Naive thymus-derived CD4-positive, alpha-beta T cell (primary cell): ENCODE measurements at regions of chr1 and their contacts with region 1.

Region 1: DNA sequence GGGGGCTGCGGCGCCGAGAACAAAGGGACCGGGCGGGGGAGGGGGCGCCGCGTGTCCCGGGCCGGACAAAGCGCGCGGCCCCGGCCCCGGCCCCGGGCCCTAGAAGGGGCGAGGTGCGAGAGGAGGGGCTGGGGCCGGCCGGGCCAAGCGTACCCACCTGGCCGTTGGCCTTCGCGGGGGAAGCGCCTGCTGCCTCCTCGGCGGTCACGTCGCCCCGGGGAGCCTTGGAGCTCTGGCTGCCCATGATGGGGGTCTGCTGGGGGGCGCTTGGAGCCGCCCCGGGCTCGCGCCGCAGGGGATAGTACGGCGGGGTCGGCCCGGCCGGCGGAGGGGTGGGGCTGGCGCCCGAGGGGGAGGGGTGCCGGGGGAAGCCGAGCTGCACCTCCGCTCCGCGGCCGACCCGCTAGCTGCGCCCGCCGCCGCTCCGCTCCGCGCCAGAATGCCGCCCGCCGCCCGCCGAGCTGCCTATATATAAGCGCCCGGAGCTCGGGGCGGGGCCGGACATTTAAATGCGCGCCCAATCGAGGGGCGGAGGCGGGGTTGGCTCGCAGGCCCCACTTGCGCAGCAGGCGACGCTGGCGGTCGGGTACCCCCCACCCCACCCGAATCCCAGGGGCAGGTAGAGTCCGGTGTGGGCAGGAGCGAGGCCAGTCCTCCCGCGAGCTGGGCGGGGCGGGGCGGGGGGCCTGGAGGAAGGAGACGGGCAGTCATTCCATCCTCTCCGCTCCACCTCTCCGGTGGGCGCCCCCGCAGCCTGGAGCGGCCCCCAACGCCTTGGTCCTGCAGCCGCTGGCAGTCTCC is at the start of gene MARCKSL1:
- DNase-seq: peak; percentile 81 to 90 (median 87)
- ATAC-seq: peak; percentile 64
- H3K4me3 ChIP-seq: peak within 1 kb of the TSS; percentile 60
- H3K4me3 Mint-ChIP-seq: peak within 1 kb of the TSS; percentile 82 to 93 (median 90)
- H3K27ac ChIP-seq: peak within 1 kb of the TSS; percentile 70
- H3K27ac Mint-ChIP-seq: peak within 1 kb of the TSS; percentile 74 to 95 (median 89)
- H3K4me1 ChIP-seq: peaks cover 20 to 33% of the 10 kb centered on the region in 2 donors
- H3K4me1 Mint-ChIP-seq: peaks cover 38 to 52% (median 43%) of the 10 kb centered on the region in 7 donors
- H3K27me3 ChIP-seq: no peaks in the 10 kb centered on the region
- H3K27me3 Mint-ChIP-seq: peaks cover 0 to 1% (median 0%) of the 10 kb centered on the region in 5 donors
- total RNA-seq, gene MARCKSL1: 22.2 to 70.2 (median 41.7) TPM

Region 2: GRCh38 chr1:31111290-31111977 is 1224.6 kb before region 1 on chr1:
- CTCF ChIA-PET with region 1: no interaction called
- POLR2A ChIA-PET with region 1: no interaction called
- intact Hi-C with region 1: no loop called
- DNase-seq: no peak
- ATAC-seq: no peak
- H3K4me3 ChIP-seq: no peak overlapping the region
- H3K4me3 Mint-ChIP-seq: no peak overlapping the region
- H3K27ac ChIP-seq: no peak overlapping the region
- H3K27ac Mint-ChIP-seq: no peak overlapping the region
- H3K4me1 ChIP-seq: no peaks in the 10 kb centered on the region
- H3K4me1 Mint-ChIP-seq: peaks cover 0 to 2% (median 0%) of the 10 kb centered on the region in 7 donors
- H3K27me3 ChIP-seq: no peaks in the 10 kb centered on the region
- H3K27me3 Mint-ChIP-seq: peaks cover 0 to 13% (median 11%) of the 10 kb centered on the region in 5 donors

Region 3: GRCh38 chr1:32072622-32073298 is 263.2 kb before region 1 on chr1 and contains the start of gene TMEM39B:
- CTCF ChIA-PET with region 1: no interaction called
- POLR2A ChIA-PET with region 1: interaction called, 4 read pairs
- intact Hi-C with region 1: loop called in 1 of 2 experiments (anchors 5 kb)
- DNase-seq: peak; percentile 90 to 97 (median 96)
- ATAC-seq: peak; percentile 92
- H3K4me3 ChIP-seq: peak within 1 kb of the TSS; percentile 98
- H3K4me3 Mint-ChIP-seq: peak within 1 kb of the TSS; percentile 83 to 94 (median 91)
- H3K27ac ChIP-seq: peak within 1 kb of the TSS; percentile 82
- H3K27ac Mint-ChIP-seq: peak within 1 kb of the TSS; percentile 84 to 95 (median 92)
- H3K4me1 ChIP-seq: peaks cover 5 to 16% of the 10 kb centered on the region in 2 donors
- H3K4me1 Mint-ChIP-seq: peaks cover 21 to 58% (median 47%) of the 10 kb centered on the region in 7 donors
- H3K27me3 ChIP-seq: no peaks in the 10 kb centered on the region
- H3K27me3 Mint-ChIP-seq: no peaks in the 10 kb centered on the region
- total RNA-seq, gene TMEM39B: 11.4 to 35.9 (median 26.4) TPM

Region 4: DNA sequence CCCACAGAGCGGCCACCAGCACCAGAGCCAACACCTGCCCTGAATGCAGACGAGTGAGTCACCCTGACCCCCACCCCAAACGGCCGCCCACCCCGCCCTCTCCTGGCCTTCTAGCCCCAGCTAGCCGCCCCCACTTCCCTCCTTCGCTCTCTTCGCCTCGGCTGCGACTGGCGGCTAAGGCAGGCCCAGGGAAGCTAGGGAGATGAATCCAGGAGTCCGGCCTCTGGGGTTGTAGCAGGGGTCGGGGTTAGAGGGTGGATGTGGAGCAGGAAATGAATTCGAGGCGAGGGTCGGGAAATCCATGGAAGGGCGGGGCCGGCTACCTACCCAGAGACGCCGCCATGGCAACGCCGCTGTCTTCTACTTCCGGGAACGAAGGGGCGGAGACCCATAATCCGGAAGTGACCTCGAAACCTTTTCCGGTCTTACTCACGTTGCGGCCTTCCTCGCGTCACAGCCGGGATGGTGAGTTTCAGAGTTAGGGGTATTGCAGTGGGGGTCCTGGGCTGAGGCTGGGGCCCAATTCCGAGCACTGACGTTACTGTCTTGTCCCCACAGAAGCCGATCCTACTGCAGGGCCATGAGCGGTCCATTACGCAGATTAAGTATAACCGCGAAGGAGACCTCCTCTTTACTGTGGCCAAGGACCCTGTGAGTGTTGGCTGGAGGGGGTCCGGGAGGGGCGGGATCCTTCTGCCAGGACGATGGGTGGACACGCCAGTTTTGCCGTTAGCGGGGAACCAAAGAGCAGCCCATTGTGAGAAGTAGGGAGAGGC is 113.8 kb before region 1 on chr1 and contains the starts of genes EIF3I and TMEM234:
- CTCF ChIA-PET with region 1: interaction called, 14 read pairs
- POLR2A ChIA-PET with region 1: interaction called, 16 read pairs
- intact Hi-C with region 1: loop called in 1 of 2 experiments (anchors 1 kb)
- DNase-seq: peak; percentile 71 to 94 (median 89)
- ATAC-seq: peak; percentile 95
- H3K4me3 ChIP-seq: peak within 1 kb of the TSS; percentile 99
- H3K4me3 Mint-ChIP-seq: peak within 1 kb of the TSS; percentile 90 to 98 (median 97)
- H3K27ac ChIP-seq: peak within 1 kb of the TSS; percentile 99
- H3K27ac Mint-ChIP-seq: peak within 1 kb of the TSS; percentile 94 to 99 (median 98)
- H3K4me1 ChIP-seq: peaks cover 23 to 24% of the 10 kb centered on the region in 2 donors
- H3K4me1 Mint-ChIP-seq: peaks cover 14 to 57% (median 37%) of the 10 kb centered on the region in 7 donors
- H3K27me3 ChIP-seq: no peaks in the 10 kb centered on the region
- H3K27me3 Mint-ChIP-seq: no peaks in the 10 kb centered on the region
- total RNA-seq, gene EIF3I: 82.6 to 182 (median 104) TPM
- total RNA-seq, gene TMEM234: 15.9 to 29.6 (median 21.4) TPM

Region 5: DNA sequence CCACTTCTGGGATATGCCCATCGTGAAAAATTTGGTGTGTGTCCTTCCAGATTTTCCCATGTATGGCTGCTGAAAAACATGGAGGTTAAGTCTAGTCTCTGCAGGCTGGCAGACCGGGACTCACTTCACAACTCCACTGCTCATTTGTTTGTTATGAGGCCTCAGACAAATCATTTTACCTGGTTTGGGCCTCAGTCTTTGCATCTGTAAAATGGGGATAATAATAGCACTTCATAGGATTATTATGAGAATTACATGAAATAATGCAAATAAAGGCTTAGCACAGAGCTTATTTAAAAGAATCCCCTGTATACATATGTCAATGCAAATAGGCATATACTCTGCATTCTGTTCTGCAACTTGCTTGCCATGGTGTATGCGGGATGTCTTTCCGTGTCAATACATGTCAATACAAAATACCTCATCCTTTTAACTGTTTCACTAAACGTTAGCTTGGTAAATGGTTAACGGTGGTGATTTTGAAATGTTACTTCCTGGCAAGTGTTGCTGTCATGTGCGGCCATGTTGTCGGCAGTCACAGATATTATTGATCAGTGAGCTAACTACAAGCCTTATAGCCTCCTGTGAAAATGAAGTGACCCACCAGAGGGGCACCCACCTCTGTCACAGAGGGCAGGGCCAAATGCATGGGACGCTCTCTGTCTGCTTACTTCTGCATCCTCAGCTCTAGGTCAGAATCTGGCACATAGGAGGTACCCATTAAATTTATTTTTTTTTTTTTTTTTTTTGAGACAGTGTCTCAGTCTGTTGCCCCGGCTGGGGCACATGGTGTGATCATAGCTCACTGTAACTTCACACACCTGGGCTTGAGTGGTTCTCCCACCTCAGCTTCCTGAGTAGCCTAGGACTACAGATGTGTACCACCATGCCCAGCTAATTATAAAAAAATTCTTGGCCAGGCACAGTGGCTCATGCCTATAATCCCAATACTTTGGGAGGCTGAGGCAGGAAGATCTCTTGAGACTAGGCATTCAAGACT is 80.6 kb before region 1 on chr1:
- CTCF ChIA-PET with region 1: interaction called, 3 read pairs
- POLR2A ChIA-PET with region 1: interaction called, 41 read pairs
- intact Hi-C with region 1: no loop called
- DNase-seq: peak in 5 of 9 donors; percentile 50 to 68 (median 62)
- ATAC-seq: peak; percentile 31
- H3K4me3 ChIP-seq: peak overlapping the region; percentile 55
- H3K4me3 Mint-ChIP-seq: peak overlapping the region; percentile 88 to 100 (median 98)
- H3K27ac ChIP-seq: peak overlapping the region; percentile 91
- H3K27ac Mint-ChIP-seq: peak overlapping the region; percentile 90 to 99 (median 97)
- H3K4me1 ChIP-seq: peaks cover 39 to 41% of the 10 kb centered on the region in 2 donors
- H3K4me1 Mint-ChIP-seq: peaks cover 24 to 56% (median 48%) of the 10 kb centered on the region in 7 donors
- H3K27me3 ChIP-seq: no peaks in the 10 kb centered on the region
- H3K27me3 Mint-ChIP-seq: no peaks in the 10 kb centered on the region

Region 6: DNA sequence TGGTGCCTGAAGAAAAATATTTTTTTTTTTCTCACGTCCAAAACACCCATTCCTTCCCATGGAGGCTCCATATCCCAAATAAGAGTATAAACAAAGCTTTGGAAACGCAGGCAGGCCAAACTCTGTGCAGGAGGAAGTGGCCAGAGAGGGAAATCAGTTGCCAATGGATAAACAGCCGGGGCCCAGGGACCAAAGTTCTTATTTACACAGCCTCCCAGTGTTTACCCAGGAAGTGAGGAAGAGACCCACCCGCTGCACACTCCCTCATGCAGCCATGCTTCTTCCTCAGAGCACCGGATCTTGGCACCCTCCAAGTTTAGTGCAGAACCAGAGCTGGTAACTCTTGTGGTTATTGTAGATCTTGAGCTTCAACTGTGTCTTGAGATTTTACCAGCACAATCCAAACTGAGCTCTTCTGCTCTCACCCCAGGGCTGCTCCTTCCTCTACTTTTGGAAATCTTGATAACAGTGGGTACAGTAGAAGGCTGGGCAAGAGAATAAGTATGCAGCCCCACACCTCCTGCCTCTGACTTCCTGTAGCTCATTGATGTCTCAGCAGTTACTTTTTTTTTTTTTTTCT is 14.2 kb before region 1 on chr1:
- CTCF ChIA-PET with region 1: interaction called, 4 read pairs
- POLR2A ChIA-PET with region 1: interaction called, 50 read pairs
- intact Hi-C with region 1: loop called in 1 of 2 experiments (anchors 1 kb)
- DNase-seq: peak in 7 of 9 donors; percentile 37 to 73 (median 57)
- ATAC-seq: peak; percentile 90
- H3K4me3 ChIP-seq: peak overlapping the region; percentile 33
- H3K4me3 Mint-ChIP-seq: peak overlapping the region; percentile 58 to 85 (median 74)
- H3K27ac ChIP-seq: peak overlapping the region; percentile 58
- H3K27ac Mint-ChIP-seq: peak overlapping the region; percentile 62 to 96 (median 94)
- H3K4me1 ChIP-seq: peaks cover 33 to 46% of the 10 kb centered on the region in 2 donors
- H3K4me1 Mint-ChIP-seq: peaks cover 27 to 69% (median 47%) of the 10 kb centered on the region in 7 donors
- H3K27me3 ChIP-seq: no peaks in the 10 kb centered on the region
- H3K27me3 Mint-ChIP-seq: no peaks in the 10 kb centered on the region

Region 7: GRCh38 chr1:32372149-32372756 is 36.3 kb after region 1 on chr1:
- CTCF ChIA-PET with region 1: interaction called, 4 read pairs
- POLR2A ChIA-PET with region 1: interaction called, 20 read pairs
- intact Hi-C with region 1: loop called (anchors 1 kb)
- DNase-seq: peak; percentile 22 to 78 (median 68)
- ATAC-seq: peak; percentile 88
- H3K4me3 ChIP-seq: no peak overlapping the region
- H3K4me3 Mint-ChIP-seq: peak overlapping the region in 2 of 10 donors; percentile 6 to 9
- H3K27ac ChIP-seq: peak overlapping the region; percentile 20
- H3K27ac Mint-ChIP-seq: peak overlapping the region in 7 of 9 donors; percentile 1 to 75 (median 57)
- H3K4me1 ChIP-seq: peaks cover 12% of the 10 kb centered on the region in 2 donors
- H3K4me1 Mint-ChIP-seq: peaks cover 15 to 22% (median 20%) of the 10 kb centered on the region in 7 donors
- H3K27me3 ChIP-seq: no peaks in the 10 kb centered on the region
- H3K27me3 Mint-ChIP-seq: no peaks in the 10 kb centered on the region